ENCODE measurements at regions of chr14 and their contacts with region 1.

Region 1: GRCh38 chr14:95561001-95561412 is 26.2 kb downstream of the GLRX5 start:
- DNase-seq: peak; percentile 96
- ATAC-seq: peak; percentile 89
- H3K4me3 Mint-ChIP-seq: no peak overlapping the region
- H3K27ac Mint-ChIP-seq: no peak overlapping the region
- H3K4me1 Mint-ChIP-seq: peaks cover 36% of the 10 kb centered on the region
- H3K27me3 Mint-ChIP-seq: peaks cover 35% of the 10 kb centered on the region
- CTCF ChIP-seq: peak; percentile 96

Region 2: GRCh38 chr14:95609387-95609990 is 48.5 kb after region 1 on chr14:
- CTCF ChIA-PET with region 1: interaction called, 13 read pairs
- POLR2A ChIA-PET with region 1: no interaction called
- DNase-seq: peak; percentile 75
- ATAC-seq: peak; percentile 92
- H3K4me3 Mint-ChIP-seq: no peak overlapping the region
- H3K27ac Mint-ChIP-seq: no peak overlapping the region
- H3K4me1 Mint-ChIP-seq: 0 out of 2 replicates have a peak, but pooled peaks cover 3% of the 10 kb centered on the region
- H3K27me3 Mint-ChIP-seq: peaks cover 23% of the 10 kb centered on the region
- CTCF ChIP-seq: peak; percentile 56; the same call in 1 of the 2 replicates

Region 3: DNA sequence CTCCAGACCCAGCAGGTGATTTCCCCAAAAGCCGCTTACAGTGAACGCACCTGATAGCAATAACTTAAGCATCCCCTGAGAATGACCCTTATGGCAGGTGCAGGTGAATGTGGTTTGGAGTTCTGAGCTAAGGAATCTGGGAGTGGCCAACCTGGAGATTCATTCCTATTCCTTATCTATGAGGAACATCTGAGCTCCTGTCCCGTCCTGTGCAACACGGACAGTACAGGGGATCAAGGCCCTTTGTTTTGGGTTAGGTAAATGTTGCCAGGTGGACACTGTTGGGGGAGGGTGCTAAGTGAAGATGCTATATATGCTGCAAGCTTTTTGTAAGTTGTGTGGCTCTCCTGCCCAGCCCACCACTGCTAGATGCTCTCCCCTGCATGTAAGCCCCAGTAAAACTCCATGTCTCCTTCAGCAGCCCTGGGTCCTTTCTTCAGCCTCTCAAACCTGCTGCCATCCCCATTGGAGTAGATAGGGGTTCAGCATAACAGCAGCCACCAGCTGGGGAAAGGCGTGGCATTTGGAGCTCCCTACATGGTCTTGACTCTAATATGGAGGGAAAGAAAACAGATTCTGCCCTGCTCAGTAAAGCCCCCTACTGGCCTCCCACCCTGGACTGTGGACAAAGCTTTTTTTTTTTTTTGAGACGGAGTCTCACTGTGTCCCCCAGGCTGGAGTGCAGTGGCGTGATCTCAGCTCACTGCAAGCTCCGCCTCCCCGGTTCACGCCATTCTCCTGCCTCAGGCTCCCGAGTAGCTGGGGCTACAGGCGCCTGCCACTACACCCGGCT is 104.3 kb after region 1 on chr14:
- CTCF ChIA-PET with region 1: interaction called, 19 read pairs
- POLR2A ChIA-PET with region 1: no interaction called
- DNase-seq: peak; percentile 28
- ATAC-seq: peak; percentile 69
- H3K4me3 Mint-ChIP-seq: no peak overlapping the region
- H3K27ac Mint-ChIP-seq: no peak overlapping the region
- H3K4me1 Mint-ChIP-seq: peaks cover 34% of the 10 kb centered on the region
- H3K27me3 Mint-ChIP-seq: peaks cover 29% of the 10 kb centered on the region
- CTCF ChIP-seq: no peak

Region 4: DNA sequence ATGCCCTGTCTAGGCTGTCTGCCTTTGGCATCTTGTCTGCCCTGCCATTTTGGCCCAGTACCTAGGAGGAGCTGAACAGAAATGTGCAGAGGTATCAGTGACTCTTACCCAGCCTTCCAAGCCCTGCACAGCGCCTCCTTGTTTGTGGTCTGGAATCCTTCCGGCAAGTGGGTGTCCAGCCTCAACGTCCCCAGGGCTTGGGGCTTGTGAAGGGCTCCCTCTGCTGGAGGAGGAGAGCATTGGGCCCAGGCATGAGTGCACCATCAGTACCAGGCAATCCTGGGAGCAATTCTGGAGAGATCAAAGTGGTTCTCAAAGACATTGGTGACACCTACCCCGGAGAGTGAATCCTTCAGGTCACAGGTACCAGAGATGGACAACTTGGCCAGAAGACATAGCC is 122.8 kb after region 1 on chr14:
- CTCF ChIA-PET with region 1: interaction called, 17 read pairs
- POLR2A ChIA-PET with region 1: no interaction called
- DNase-seq: peak; percentile 75
- ATAC-seq: peak; percentile 83
- H3K4me3 Mint-ChIP-seq: no peak overlapping the region
- H3K27ac Mint-ChIP-seq: no peak overlapping the region
- H3K4me1 Mint-ChIP-seq: peaks cover 35% of the 10 kb centered on the region
- H3K27me3 Mint-ChIP-seq: peaks cover 12% of the 10 kb centered on the region
- CTCF ChIP-seq: peak; percentile 67; the same call in 1 of the 2 replicates

Region 5: GRCh38 chr14:95692109-95692508 is 131.1 kb after region 1 on chr14:
- CTCF ChIA-PET with region 1: interaction called, 11 read pairs
- POLR2A ChIA-PET with region 1: no interaction called
- DNase-seq: no peak
- ATAC-seq: no peak
- H3K4me3 Mint-ChIP-seq: no peak overlapping the region
- H3K27ac Mint-ChIP-seq: no peak overlapping the region
- H3K4me1 Mint-ChIP-seq: peaks cover 24% of the 10 kb centered on the region
- H3K27me3 Mint-ChIP-seq: peaks cover 54% of the 10 kb centered on the region
- CTCF ChIP-seq: no peak

Region 6: DNA sequence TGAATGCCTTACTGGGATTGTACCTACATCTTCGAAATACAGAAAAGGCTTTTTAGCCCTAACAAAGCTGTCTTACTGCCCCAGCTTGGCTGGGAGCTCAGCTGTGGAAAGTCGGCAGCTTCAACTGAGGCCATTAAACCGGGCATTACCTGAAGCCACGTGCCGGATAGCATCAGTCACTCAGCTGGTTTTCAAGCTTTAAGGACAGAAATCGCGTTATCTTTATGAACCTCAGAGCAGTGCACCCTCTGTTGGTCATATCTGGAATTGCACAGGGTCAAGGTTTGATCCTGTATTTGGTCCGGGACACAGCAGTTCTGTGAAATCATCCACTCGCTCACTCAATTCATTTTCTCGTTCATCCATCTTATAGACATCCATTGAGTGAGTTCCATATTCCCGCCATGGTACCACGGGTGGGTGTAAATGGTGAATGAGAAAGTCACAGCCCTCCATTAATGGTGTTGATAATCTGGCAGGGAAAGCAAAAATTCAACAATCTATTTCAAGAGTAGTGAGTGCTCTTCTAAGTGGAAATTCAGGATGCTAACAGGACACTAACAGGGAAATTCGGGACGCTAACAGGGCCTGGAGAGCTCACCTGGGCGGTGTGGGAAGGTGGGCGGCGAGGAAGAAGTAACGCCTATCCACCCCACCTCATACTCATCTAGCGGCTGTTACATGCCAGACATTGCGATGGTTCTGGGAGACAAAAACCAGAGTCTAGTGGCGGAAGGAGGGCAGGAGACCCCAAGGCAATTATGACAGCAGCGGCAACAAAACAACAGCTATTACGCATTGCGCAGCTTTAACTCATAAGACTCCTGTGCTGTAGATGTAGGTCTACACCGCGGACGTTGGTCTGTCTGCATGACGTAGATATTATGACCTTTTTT is 213.5 kb after region 1 on chr14:
- CTCF ChIA-PET with region 1: interaction called, 12 read pairs
- POLR2A ChIA-PET with region 1: no interaction called
- DNase-seq: peak; percentile 76
- ATAC-seq: peak; percentile 51
- H3K4me3 Mint-ChIP-seq: no peak overlapping the region
- H3K27ac Mint-ChIP-seq: no peak overlapping the region
- H3K4me1 Mint-ChIP-seq: peaks cover 10% of the 10 kb centered on the region
- H3K27me3 Mint-ChIP-seq: peaks cover 32% of the 10 kb centered on the region
- CTCF ChIP-seq: peak; percentile 97